Ovary (tissue), 10 donors: ENCODE measurements at regions of chr1 and their contacts with region 1.

Region 1: GRCh38 chr1:78410643-78411042 is 80.1 kb upstream of the PTGFR start:
- DNase-seq: no peak
- H3K4me3 ChIP-seq: no peak overlapping the region
- H3K27ac ChIP-seq: no peak overlapping the region
- H3K4me1 ChIP-seq: no peaks in the 10 kb centered on the region
- H3K27me3 ChIP-seq: no peaks in the 10 kb centered on the region
- CTCF ChIP-seq: no peak
- EP300 ChIP-seq: no peak
- POLR2A ChIP-seq: no peak

Region 2: DNA sequence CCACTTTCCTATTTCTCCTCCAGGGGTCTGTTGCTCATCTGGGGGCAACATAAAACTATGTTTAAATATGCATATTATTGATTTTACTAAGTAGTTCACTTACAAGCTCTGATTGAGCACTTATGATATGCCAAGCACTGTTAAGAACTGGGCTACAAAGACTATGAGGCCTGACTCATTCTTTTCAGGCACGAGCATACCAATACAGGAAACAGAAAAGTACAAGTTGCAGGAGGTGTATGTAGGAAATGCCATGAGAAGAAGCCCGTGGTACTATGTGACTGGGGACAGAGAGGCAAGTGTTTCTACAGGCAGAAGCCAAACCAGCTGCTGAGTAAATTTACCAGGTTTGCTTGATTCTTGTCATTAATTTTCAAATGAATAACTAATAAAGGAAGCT is 40.3 kb before region 1 on chr1:
- intact Hi-C with region 1: loop called in 1 of 4 experiments (anchors 2 kb)
- DNase-seq: no peak
- H3K4me3 ChIP-seq: no peak overlapping the region
- H3K27ac ChIP-seq: no peak overlapping the region
- H3K4me1 ChIP-seq: no peaks in the 10 kb centered on the region
- H3K27me3 ChIP-seq: no peaks in the 10 kb centered on the region
- CTCF ChIP-seq: no peak
- EP300 ChIP-seq: no peak
- POLR2A ChIP-seq: no peak

Region 3: GRCh38 chr1:79603843-79604242 is 1193.2 kb after region 1 on chr1:
- intact Hi-C with region 1: no loop called
- DNase-seq: no peak
- H3K4me3 ChIP-seq: no peak overlapping the region
- H3K27ac ChIP-seq: no peak overlapping the region
- H3K4me1 ChIP-seq: no peaks in the 10 kb centered on the region
- H3K27me3 ChIP-seq: no peaks in the 10 kb centered on the region
- CTCF ChIP-seq: no peak
- EP300 ChIP-seq: no peak
- POLR2A ChIP-seq: no peak